Activated B cell treated with CpG ODN at 0.5 μM for 24 hours (primary cell): ENCODE measurements at regions of chr22 and their contacts with region 1.

Region 1: DNA sequence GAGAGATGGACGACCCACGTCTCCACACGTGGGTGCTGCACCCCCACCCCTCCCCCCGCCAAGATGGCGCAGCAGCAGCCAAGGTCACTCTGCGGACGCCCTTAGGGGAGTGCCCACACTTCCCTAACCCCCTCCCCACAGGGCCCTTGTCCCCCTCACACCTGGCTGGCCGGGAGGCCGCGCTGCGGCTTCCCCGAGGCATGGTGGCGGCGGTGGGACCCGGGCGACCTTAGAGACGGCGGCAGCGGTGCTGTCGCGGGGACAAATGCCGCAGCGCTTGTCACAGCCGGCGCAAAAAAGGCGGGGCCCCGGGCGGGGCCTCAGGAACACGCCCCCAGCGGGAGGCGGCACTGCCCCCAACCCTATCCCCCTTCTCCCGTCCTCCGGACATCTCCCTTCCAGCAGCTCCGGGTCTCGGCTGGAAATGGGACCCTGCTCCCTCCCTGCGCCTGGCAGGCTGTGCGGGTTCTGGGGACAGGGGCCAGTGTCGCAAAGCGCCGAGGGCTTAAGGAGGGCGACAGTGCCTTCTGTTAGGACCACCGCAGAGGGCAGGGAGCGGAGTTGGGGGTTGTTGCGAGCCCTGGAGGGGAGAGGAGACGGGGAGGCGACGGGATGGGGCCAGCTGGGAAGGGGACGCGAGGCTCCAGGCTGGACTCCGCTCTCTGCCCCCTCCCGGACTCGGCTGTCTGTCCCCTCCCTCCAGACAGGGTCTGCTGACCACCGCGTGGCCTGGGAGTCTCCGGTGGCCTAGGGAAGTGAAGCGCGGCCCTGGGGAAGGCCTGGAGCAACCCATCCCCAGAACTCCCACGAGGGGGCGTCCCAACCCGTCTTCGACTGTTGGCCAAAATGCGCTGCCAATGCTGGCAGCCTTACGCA is at the start of gene CHCHD10:
- DNase-seq: peak; percentile 81
- ATAC-seq: peak; percentile 66
- H3K4me3 Mint-ChIP-seq: peak within 1 kb of the TSS; percentile 86
- H3K27ac Mint-ChIP-seq: peak within 1 kb of the TSS; percentile 73
- H3K4me1 Mint-ChIP-seq: peaks cover 74% of the 10 kb centered on the region
- H3K27me3 Mint-ChIP-seq: no peaks in the 10 kb centered on the region
- CTCF ChIP-seq: no peak
- total RNA-seq, gene CHCHD10: 63.4 and 68.8 TPM in 2 replicates

Region 2: GRCh38 chr22:22043296-22044078 is 1724.4 kb before region 1 on chr22:
- CTCF ChIA-PET with region 1: no interaction called
- POLR2A ChIA-PET with region 1: interaction called, 10 read pairs
- intact Hi-C with region 1: no loop called
- DNase-seq: no peak
- ATAC-seq: peak; percentile 73
- H3K4me3 Mint-ChIP-seq: peak overlapping the region; percentile 82
- H3K27ac Mint-ChIP-seq: peak overlapping the region; percentile 82
- H3K4me1 Mint-ChIP-seq: peaks cover 73% of the 10 kb centered on the region
- H3K27me3 Mint-ChIP-seq: no peaks in the 10 kb centered on the region
- CTCF ChIP-seq: no peak

Region 3: DNA sequence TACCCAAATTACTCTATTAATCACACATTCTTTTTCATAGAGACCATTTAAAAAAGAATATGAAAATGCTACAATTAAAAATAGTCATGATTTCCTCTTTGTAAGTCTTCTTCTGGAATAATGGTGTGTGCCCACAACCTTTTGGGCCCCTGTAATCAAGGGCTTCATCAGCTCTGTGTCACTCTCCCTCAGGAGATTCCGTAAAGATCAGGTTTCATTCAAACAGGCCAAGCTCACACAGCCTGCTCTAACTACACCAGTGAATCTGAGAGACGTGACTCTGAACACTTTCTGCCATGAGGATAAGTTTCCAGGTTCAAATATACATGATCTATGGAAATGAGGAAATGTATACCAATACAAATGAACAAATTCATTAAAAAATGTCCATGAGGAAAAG is 145.3 kb before region 1 on chr22:
- CTCF ChIA-PET with region 1: no interaction called
- POLR2A ChIA-PET with region 1: no interaction called
- intact Hi-C with region 1: loop called (anchors 10 kb)
- DNase-seq: no peak
- ATAC-seq: no peak
- H3K4me3 Mint-ChIP-seq: no peak overlapping the region
- H3K27ac Mint-ChIP-seq: no peak overlapping the region
- H3K4me1 Mint-ChIP-seq: peaks cover 3% of the 10 kb centered on the region
- H3K27me3 Mint-ChIP-seq: no peaks in the 10 kb centered on the region
- CTCF ChIP-seq: no peak

Region 4: DNA sequence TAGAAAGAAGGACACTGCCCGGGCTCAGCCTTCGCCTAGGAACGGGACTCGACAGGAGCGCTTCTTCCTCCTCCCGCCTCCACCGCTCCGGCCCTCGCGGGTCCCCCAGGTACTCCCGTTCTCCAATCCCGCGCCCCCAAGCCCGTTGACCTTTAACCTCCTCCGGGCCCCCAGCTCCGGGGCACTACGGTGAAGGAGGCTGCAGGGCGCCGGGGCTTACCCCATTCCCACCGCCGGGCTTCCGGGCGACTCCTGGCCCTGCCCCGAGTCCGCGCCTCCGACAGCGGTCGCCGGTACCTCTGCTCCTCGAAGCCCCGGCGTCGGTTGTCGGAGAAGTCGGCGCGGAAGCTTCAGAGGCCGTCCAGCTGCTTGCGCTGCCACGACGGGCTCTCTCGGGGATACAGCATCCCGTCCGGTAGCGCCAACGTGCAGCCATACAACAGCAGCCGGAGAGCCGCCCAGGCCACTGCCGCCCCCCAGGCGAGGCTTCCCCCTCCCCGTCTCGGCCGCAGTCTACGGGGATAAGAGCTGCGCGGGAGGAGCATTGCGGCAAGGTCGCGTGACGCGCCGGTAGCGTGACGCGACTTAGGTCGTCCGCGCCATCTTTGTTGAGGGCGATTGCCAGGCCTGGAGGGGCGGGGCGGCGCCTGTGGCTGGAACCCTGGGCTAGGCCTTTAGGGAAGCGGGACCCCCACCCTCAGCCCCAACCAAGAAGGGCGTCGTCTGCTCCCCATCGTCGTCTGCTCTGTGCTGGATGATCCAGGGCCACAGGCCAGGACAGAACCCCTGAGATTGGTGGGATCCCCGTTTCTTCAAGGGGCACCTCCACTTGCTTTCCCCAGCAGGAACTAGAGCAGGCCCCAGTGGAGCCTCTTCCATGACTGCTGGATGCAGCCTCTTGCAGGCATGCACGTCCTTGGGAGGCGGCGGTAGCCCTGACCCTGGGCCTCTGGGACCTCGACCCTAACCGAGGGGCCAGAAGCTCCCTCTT is 50.8 kb before region 1 on chr22:
- CTCF ChIA-PET with region 1: interaction called, 4 read pairs
- POLR2A ChIA-PET with region 1: interaction called, 6 read pairs
- intact Hi-C with region 1: loop called (anchors 5 kb)
- DNase-seq: peak; percentile 81
- ATAC-seq: peak; percentile 97
- H3K4me3 Mint-ChIP-seq: peak overlapping the region; percentile 81
- H3K27ac Mint-ChIP-seq: peak overlapping the region; percentile 69
- H3K4me1 Mint-ChIP-seq: peaks cover 16% of the 10 kb centered on the region
- H3K27me3 Mint-ChIP-seq: no peaks in the 10 kb centered on the region
- CTCF ChIP-seq: no peak

Region 5: DNA sequence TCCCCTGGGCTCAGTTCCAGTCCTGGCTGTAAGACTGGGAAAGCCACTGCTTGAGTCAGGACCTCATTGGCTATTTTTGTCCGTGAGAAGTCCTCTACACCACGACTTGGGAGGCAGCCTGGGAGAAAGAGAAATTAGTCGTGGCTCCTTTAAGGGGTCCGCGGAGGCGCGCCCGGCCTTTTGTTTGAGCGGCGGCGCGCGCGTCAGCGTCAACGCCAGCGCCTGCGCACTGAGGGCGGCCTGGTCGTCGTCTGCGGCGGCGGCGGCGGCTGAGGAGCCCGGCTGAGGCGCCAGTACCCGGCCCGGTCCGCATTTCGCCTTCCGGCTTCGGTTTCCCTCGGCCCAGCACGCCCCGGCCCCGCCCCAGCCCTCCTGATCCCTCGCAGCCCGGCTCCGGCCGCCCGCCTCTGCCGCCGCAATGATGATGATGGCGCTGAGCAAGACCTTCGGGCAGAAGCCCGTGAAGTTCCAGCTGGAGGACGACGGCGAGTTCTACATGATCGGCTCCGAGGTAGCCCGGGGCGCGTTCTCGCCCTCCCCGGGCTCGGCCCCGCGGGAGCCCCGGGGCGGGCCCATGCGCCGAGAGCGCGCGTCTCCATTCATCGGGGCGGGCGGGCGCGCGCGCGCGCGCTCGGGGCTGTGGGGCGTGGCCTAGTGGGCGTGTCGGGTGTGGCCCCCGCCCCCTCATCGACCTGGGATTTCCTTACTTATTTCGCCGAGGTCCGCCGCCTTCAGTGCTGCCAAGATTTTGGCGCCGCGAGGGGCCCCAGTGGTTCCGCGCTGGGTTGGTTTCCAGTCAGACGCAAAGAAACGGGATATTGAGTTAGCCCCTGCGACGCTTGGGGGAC is 19.1 kb after region 1 on chr22 and contains the start of gene SMARCB1:
- CTCF ChIA-PET with region 1: interaction called, 4 read pairs
- POLR2A ChIA-PET with region 1: interaction called, 20 read pairs
- intact Hi-C with region 1: loop called (anchors 1 kb)
- DNase-seq: peak; percentile 89
- ATAC-seq: peak; percentile 85
- H3K4me3 Mint-ChIP-seq: peak within 1 kb of the TSS; percentile 90
- H3K27ac Mint-ChIP-seq: peak within 1 kb of the TSS; percentile 88
- H3K4me1 Mint-ChIP-seq: peaks cover 51% of the 10 kb centered on the region
- H3K27me3 Mint-ChIP-seq: no peaks in the 10 kb centered on the region
- CTCF ChIP-seq: no peak
- total RNA-seq, gene SMARCB1: 156 and 161 TPM in 2 replicates

Region 6: DNA sequence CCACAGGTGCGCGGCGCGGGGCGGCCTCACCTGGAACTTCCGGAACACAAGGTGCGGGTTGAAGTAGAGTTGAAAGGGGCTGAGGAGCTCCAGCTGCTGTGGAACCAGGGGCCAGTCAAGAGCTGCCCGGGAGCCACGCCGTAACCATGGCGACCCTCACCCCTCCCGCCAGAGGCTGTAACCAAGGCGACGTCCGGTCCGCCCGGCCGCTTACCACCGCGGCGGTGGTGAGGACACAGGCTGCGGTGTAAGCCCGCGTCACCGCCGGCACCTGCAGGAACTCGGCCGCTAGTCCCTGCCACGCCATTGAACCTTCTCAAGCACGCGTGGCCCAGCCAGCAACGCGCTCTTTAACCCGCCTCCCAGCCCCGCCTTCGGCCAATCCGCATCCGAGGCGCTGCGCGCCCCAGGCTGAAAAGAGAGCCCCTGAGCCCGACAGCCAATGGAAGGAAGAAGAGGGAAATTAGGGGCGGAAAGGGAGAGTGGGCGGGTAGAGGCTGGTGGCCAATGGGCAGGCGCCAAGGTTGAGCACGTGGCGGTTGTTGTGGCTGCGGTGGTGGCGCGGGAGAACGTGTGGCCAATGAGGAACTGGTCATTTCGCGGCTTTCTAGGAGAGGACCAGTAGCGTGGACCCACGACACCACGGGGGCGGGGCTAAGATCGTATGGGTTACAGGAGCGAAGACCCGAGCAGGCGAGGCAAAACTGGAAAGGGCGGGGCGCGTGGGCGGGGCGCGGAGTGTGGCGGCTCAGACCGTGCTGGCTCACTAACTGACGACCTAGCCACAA is 71.0 kb after region 1 on chr22 and contains the start of gene DERL3:
- CTCF ChIA-PET with region 1: interaction called, 4 read pairs
- POLR2A ChIA-PET with region 1: interaction called, 5 read pairs
- intact Hi-C with region 1: loop called (anchors 1 kb)
- DNase-seq: peak; percentile 95
- ATAC-seq: peak; percentile 82
- H3K4me3 Mint-ChIP-seq: peak within 1 kb of the TSS; percentile 88
- H3K27ac Mint-ChIP-seq: peak within 1 kb of the TSS; percentile 95
- H3K4me1 Mint-ChIP-seq: peaks cover 75% of the 10 kb centered on the region
- H3K27me3 Mint-ChIP-seq: no peaks in the 10 kb centered on the region
- CTCF ChIP-seq: no peak
- total RNA-seq, gene DERL3: 15.4 and 18.3 TPM in 2 replicates

Region 7: GRCh38 chr22:23857606-23858483 is 89.9 kb after region 1 on chr22 and contains the start of gene SLC2A11:
- CTCF ChIA-PET with region 1: interaction called, 7 read pairs
- POLR2A ChIA-PET with region 1: interaction called, 18 read pairs
- intact Hi-C with region 1: no loop called
- DNase-seq: peak; percentile 90
- ATAC-seq: peak; percentile 94
- H3K4me3 Mint-ChIP-seq: peak within 1 kb of the TSS; percentile 91
- H3K27ac Mint-ChIP-seq: peak within 1 kb of the TSS; percentile 94
- H3K4me1 Mint-ChIP-seq: peaks cover 22% of the 10 kb centered on the region
- H3K27me3 Mint-ChIP-seq: no peaks in the 10 kb centered on the region
- CTCF ChIP-seq: no peak
- total RNA-seq, gene SLC2A11: 24.0 and 30.2 TPM in 2 replicates